ENCODE measurements at regions of chr10 and their contacts with region 1.

Region 1: DNA sequence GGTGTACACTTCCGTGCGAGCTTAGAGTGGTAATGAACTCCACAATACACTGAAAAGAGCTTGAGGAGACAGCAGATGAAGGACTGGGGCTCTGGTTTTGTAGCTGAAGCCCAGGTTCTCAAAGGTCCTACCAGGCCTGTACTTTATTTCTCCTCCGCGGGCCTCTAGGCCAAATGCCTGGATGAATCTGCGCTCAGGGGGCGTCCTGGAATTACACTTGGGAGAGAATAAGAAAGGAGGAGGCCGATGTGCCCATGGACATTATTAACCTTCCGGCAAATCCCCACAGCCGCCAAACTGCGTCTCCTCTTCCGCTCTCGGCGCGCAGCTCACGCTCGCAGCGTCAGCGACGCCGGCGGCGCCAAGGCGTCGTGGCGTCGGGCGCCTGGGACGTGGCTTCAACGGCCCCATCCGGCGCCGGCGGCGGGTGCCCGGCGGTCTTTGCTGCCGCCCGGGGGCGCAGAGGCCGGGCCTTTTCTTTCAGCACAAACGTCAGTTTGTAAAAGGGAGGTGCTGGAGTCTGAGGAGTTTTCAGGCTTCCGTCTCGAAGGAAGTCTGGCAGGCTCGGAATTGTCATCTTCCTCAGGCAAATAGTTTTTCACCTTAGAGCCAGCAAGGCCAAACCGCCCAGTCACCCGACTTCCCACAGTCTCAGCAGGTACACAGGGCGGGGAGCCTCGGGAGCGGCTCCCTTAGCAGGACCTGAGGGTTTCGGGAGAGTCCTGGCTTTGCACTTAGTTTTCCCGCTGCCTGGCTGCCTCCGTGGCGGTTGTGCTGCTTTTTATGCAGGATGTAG is at the start of gene CCDC7:
- DNase-seq: peak; percentile 90
- total RNA-seq, gene CCDC7: 32.5 TPM

Region 2: DNA sequence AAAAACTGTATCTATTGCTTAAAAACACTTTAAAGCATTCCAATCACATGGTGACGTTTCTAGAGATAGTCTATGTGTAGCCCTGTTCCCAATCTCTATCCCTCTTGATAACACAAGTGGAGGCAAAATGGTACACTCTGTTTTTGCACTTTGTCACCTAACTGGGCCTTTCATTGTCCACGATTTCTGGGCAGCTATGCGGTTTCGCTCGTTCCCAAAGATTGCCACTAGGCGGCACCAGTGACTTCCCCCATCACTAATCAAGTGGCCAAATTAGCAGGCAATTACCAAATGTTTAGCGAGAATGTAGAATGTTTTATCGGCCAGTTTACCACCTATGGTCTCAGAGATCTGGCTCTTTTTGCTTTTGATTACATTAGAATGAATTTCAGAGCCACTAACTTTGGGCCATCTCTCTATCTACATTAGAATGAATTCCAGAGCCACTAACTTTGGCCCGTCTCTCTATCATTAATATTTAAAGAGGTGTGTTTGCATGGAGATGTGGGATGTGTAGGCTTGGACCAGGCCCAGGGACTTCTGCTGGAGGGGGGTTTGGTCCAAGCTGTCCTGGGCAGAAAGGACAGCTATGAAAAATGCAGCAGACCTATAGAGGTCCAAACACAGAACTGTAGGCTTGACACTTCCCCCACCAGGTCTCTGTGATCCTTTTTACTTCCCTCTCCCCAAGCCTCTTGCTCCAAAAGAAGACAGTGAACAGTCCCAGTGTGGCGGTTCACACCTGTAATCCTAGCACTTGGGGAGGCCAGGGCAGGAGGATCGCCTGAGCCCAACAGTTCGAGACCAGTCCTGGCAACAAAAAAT is 189.1 kb before region 1 on chr10:
- intact Hi-C with region 1: loop called (anchors 10 kb)
- DNase-seq: peak; percentile 85

Region 3: DNA sequence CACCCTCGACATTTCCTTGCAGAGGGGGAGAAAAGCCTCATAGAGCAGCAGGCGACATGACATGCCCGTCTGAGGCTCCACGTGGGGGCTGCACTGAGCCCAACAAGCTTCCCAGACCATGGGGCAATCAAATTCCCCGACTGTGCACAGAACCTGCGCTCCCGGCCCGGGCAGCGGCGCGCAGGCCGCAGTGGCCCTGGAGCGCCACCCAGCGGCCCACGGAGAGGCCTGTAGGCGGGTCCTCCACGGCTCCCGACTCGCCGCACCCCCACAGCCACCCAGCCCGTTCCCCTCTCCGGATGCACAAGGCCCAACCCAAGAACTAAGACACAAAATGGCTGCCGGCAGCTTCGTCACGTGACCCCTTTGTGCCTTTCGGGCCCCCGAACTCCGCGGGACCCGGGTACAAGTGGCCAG is 99.8 kb before region 1 on chr10:
- intact Hi-C with region 1: loop called (anchors 2 kb)
- DNase-seq: peak; percentile 98

Region 4: GRCh38 chr10:32378363-32379317 is 67.3 kb before region 1 on chr10:
- intact Hi-C with region 1: loop called (anchors 1 kb)
- DNase-seq: peak; percentile 97

Region 5: DNA sequence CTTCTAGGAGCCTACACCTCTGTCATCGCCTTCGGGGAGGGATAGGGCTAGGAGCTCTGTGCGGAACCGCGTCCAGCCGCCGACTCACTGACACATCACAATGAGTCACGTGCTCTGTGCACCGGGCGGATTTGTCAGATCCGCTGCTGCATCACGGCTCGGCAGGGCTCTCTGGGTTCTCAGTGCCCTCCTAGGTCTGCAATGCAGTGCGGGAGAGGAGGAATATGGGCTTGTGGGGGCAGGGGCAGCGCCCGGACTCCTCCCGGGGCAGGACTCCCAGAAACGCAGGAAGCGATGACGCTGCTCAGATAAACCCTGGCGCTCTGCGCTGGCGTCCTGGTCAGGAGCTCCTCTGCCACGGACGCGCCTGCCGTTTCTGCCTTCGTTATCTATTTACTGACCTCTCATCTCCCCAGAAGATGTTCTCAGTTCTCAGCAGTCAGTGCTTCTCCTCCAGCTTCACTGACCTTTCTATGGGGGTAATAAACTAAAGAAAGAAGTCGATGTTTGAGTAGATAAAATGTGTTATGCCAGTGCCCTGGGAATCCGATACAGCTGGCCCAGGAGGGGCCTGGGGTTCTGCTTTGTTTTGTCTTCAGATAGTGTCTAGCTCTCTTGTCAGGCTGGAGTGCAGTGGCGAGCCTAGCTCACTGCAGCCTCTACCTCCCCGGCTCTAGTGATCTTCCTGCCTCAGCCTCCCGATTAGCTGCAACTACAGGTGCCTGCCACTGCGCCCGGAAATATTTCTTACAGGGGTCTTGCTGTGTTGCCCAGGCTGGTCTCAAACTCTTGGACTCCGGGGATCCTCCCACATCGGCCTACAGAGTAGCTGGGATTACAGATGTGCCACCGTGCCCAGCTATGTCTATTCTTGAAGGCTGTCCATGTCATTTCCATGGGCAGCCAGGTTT is 534.9 kb after region 1 on chr10:
- intact Hi-C with region 1: loop called (anchors 10 kb)
- DNase-seq: peak; percentile 95

Measured in cardiac septum (tissue), 1 donor.